ENCODE measurements at regions of chr15 and their contacts with region 1.

Region 1: DNA sequence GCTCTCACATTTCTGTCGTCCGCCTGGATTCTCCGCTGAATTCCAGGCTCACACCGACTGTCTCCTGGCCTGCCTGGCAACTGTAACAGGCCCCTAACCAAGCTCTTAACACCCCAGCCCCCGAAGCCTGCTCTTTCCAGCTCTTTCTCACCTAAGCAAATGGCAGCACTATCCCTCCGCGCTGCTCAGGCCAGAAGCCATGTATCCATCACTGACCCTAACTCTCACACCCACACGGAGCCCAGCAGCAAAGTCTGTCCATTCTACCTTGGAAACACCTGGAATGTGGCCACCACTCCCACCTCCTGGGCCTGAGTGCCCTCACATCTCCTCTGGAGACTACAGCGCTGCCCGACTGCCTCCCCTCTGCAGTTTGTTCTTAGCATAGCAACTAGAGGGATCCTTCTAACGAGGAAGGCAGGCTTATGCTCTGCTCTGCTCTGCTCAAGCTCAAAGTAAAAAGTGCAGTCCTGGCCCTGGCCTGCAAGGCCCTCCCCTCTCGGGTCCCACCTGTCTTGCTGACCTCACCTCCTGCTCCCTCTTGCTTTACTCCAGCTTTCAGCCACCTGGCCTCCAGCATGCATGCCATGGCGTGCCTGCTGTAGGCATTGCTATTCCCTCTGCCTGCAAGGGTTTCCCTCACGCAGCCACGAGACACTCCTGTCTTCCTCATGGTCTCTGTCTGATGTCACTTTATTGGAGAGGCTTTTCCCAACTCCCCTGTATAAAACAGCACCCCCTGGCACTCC is 27.2 kb downstream of the FEM1B start:
- DNase-seq: peak; percentile 77

Region 2: GRCh38 chr15:68078365-68078764 is 226.4 kb before region 1 on chr15:
- intact Hi-C with region 1: no loop called
- DNase-seq: no peak

Region 3: DNA sequence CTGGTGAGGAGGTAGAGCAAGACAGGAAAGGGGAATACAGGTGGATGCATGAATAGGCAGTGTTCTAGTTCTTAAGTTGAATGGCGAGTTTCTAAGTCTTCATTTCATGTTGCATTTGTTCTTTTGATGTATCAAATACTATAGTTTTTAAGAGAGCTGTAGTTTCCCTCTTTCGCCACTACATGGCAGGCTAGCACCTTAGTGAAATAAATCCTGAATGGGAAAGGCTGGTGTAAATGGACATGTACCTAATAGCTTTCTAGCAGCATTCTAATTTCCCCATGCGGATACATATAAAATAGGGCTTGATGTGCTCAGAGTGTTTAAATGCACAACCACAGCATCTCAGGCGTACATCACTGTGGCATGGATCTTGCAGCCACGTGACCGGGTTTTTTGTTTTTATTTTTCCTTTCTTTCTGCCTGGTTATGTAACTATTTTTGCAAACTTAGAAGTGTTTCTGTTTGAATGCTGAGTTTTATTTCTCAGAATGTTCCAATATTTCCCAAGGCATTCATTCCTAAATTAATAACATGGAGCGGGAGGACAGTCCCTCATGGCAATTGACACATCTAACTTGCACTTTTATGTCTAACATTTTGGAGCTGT is 51.7 kb before region 1 on chr15:
- intact Hi-C with region 1: loop called in 1 of 2 experiments (anchors 5 kb)
- DNase-seq: no peak

Region 4: GRCh38 chr15:68383161-68384074 is 78.7 kb after region 1 on chr15:
- intact Hi-C with region 1: loop called in 1 of 2 experiments (anchors 5 kb)
- DNase-seq: peak; percentile 23

Region 5: DNA sequence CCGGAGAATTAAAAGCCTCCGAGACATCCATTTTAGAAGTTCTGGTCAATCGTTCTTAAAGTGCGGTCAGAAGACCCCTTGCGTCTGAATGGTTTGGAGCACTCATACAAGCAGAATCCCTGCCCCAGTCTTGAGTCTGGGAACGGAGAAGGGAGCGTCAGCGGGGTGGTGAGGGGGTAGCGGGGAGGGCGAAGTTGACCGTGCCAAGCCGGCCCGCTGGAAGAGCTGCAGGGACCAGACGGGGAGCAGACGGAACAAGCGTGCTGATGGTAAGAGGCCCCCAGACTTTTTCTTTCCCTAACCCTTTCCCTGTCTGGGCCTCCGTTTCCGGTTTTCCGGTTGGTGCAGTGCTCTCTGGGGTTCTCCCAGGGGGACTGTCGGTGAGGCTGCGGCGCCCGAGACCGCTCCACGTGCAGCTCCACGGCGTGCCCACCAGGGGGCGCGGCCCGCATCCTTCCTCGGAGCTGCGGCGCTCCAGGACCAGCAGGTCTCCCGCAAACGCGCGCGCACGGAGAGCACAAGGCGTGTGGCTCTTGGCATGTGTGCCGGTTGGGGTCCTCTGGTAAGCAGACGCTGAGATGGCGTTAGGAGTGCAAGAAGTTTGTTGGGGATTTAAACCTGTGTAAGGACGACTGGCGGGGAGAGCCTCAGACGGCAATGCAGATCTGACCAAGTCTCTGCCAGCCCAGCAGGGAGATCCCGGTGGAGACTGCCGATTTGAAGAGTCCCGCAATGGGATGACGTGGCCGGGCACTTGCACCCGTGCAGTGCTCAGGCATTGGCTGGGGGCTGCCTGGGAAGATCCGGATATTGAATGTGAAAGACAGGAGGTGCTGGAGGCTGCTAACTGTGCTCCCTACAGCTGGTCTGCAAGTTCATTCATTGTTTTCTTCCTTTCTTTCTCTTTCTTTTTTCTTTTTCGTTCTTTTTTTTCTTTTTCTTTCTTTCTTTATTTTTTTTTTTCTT is 254.9 kb after region 1 on chr15:
- intact Hi-C with region 1: loop called in 1 of 2 experiments (anchors 10 kb)
- DNase-seq: peak; percentile 94

Measured in posterior vena cava (tissue), 2 donors.